CD8-positive, alpha-beta T cell (primary cell): ENCODE measurements at regions of chr20 and their contacts with region 1.

Region 1: DNA sequence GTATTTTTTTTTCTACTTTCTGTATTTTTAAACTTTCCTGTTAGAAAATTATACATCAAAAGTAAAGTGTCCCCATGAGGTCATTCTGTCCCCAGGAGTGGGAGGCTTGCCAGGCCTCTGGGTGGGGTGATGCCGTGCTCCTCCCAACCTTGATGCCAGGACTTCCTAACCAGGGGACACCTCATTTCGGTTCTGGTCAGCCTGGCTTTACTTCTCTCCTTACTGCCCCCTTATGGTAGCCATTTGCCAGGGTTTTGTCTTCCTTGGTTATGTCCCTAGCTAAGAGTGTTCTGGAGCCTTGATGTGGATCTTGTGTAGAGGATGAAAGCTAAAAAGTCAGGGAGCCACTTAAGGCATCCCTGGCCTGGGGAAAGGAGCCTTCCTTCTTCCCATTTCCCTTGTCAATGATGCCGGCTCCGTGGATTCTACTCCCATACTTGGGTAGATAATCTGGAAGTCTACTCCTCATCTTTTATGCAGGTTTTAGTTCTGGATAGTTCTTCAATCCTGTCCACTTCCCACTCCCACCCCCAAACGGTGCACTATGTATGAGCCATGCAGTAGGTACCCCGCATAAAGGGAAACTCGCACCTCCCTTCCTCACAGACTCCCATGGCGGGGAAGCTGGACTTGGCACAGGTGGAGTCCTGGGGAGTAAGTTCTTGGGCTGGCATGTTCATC is 164.1 kb upstream of the SALL4 start:
- DNase-seq: peak in 2 of 9 experiments; percentile 23 to 35
- ATAC-seq: no peak
- H3K4me3 ChIP-seq: no peak overlapping the region
- H3K4me3 Mint-ChIP-seq: no peak overlapping the region
- H3K27ac ChIP-seq: no peak overlapping the region
- H3K27ac Mint-ChIP-seq: no peak overlapping the region
- H3K4me1 ChIP-seq: no peaks in the 10 kb centered on the region
- H3K4me1 Mint-ChIP-seq: no peaks in the 10 kb centered on the region
- H3K27me3 ChIP-seq: no peaks in the 10 kb centered on the region
- H3K27me3 Mint-ChIP-seq: peaks cover 8% of the 10 kb centered on the region
- CTCF ChIP-seq: no peak

Region 2: DNA sequence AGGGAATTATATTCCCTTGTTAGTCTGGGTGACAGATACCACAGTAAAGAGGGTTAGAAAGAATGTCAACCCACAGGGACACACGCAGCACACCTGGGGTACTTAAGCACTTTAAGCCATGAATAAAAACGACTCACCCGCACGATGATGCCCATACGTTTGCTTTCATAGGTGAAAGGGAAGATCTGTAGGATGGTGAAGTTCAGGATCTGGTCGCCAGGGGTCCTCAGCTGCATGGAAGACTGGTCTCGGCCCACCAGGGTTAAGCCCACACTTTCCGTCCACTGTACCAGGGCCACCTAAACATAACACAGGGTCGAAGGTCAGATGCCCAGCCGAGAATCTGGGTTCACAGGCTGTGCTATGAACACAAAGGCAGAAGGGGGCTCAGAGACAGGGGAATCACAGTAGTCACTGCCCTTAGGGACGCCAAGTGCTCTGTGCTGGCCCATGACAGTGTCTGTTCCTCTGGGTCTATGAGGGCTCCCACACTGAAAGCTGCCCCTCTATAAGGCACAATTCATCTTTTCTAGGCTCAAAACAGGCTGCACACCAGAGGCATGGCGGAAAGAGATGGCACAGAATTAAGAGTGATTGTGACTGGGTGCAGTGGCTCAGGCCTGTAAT is 327.1 kb before region 1 on chr20:
- CTCF ChIA-PET with region 1: no interaction called
- POLR2A ChIA-PET with region 1: no interaction called
- intact Hi-C with region 1: loop called in 1 of 2 experiments (anchors 5 kb)
- DNase-seq: peak; percentile 15 to 75 (median 50)
- ATAC-seq: peak; percentile 44
- H3K4me3 ChIP-seq: no peak overlapping the region
- H3K4me3 Mint-ChIP-seq: no peak overlapping the region
- H3K27ac ChIP-seq: no peak overlapping the region
- H3K27ac Mint-ChIP-seq: no peak overlapping the region
- H3K4me1 ChIP-seq: no peaks in the 10 kb centered on the region
- H3K4me1 Mint-ChIP-seq: no peaks in the 10 kb centered on the region
- H3K27me3 ChIP-seq: no peaks in the 10 kb centered on the region
- H3K27me3 Mint-ChIP-seq: peaks cover 3% of the 10 kb centered on the region
- CTCF ChIP-seq: peak; percentile 59